A673 (cell line): ENCODE measurements at regions of chr7 and their contacts with region 1.

Region 1: GRCh38 chr7:47818796-47819606 is 129.3 kb downstream of the PKD1L1 start:
- DNase-seq: peak; percentile 65
- H3K4me3 ChIP-seq: no peak overlapping the region
- H3K27ac ChIP-seq: no peak overlapping the region
- H3K4me1 ChIP-seq: no peaks in the 10 kb centered on the region
- H3K27me3 ChIP-seq: peaks cover 15% of the 10 kb centered on the region
- CTCF ChIP-seq: peak; percentile 95

Region 2: DNA sequence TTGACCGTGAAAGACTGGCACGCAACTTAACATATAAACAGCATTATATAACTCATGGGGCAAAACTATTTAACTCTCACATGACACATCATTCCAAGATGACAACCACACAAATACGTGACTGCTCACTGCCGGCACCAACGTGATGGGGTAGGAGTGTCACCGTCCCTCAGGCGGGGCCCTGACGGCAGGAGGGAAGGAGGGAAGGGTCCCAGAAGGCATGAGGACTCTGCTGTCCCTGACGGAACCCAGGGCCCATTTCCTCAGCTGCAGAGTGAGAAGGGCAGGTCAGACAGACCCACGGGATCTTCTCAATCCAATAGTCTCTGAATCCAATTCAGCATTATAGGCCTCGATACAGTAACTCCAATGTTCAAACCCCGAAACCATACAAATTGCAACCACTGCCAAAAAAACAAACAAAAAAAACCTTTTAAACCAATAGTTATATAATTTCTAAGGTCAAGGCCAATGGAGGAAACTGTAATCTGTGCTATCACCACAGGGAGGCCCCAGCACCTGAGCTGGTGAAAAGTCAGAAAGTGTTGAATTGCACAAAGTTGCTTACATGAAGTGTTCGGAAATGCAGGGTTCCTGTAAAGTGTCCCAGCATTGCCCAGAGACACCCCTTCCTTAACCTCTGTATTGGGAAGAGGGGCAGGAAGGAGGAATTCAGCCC is 374.5 kb before region 1 on chr7:
- CTCF ChIA-PET with region 1: interaction called, 3 read pairs
- POLR2A ChIA-PET with region 1: no interaction called
- intact Hi-C with region 1: loop called (anchors 5 kb)
- DNase-seq: no peak
- H3K4me3 ChIP-seq: no peak overlapping the region
- H3K27ac ChIP-seq: no peak overlapping the region
- H3K4me1 ChIP-seq: no peaks in the 10 kb centered on the region
- H3K27me3 ChIP-seq: no peaks in the 10 kb centered on the region
- CTCF ChIP-seq: peak; percentile 20; the same call in 1 of the 2 replicates